Natural killer cell (primary cell): ENCODE measurements at regions of chr2 and their contacts with region 1.

Region 1: GRCh38 chr2:96320728-96321622 is 4.1 kb upstream of the ITPRIPL1 start:
- DNase-seq: peak; percentile 21 to 50
- ATAC-seq: peak in 2 of 3 donors; percentile 13 to 23
- H3K4me3 ChIP-seq: peak overlapping the region; percentile 90
- H3K4me3 Mint-ChIP-seq: peak overlapping the region; percentile 90
- H3K27ac ChIP-seq: peak overlapping the region; percentile 75
- H3K27ac Mint-ChIP-seq: peak overlapping the region; percentile 64 to 75
- H3K4me1 ChIP-seq: peaks cover 59% of the 10 kb centered on the region
- H3K4me1 Mint-ChIP-seq: peaks cover 62 to 76% of the 10 kb centered on the region in 2 donors
- H3K27me3 ChIP-seq: no peaks in the 10 kb centered on the region
- H3K27me3 Mint-ChIP-seq: no peaks in the 10 kb centered on the region
- CTCF ChIP-seq: no peak

Region 2: GRCh38 chr2:96305091-96305978 is 15.6 kb before region 1 on chr2 and contains the start of gene SNRNP200:
- intact Hi-C with region 1: loop called (anchors 2 kb)
- DNase-seq: peak; percentile 83 to 96
- ATAC-seq: peak; percentile 90 to 95 (median 90)
- H3K4me3 ChIP-seq: peak within 1 kb of the TSS; percentile 91
- H3K4me3 Mint-ChIP-seq: peak within 1 kb of the TSS; percentile 98
- H3K27ac ChIP-seq: peak within 1 kb of the TSS; percentile 94
- H3K27ac Mint-ChIP-seq: peak within 1 kb of the TSS; percentile 97 to 99
- H3K4me1 ChIP-seq: peaks cover 24% of the 10 kb centered on the region
- H3K4me1 Mint-ChIP-seq: peaks cover 55 to 56% of the 10 kb centered on the region in 2 donors
- H3K27me3 ChIP-seq: no peaks in the 10 kb centered on the region
- H3K27me3 Mint-ChIP-seq: no peaks in the 10 kb centered on the region
- CTCF ChIP-seq: no peak
- total RNA-seq, gene SNRNP200: 207 to 236 (median 228) TPM